Posterior vena cava (tissue), 2 donors: ENCODE measurements at regions of chr7 and their contacts with region 1.

Region 1: GRCh38 chr7:5997222-5997808 is 11.5 kb downstream of the PMS2 start:
- DNase-seq: no peak

Region 2: GRCh38 chr7:5854738-5855137 is 142.6 kb before region 1 on chr7:
- intact Hi-C with region 1: no loop called
- DNase-seq: no peak

Region 3: DNA sequence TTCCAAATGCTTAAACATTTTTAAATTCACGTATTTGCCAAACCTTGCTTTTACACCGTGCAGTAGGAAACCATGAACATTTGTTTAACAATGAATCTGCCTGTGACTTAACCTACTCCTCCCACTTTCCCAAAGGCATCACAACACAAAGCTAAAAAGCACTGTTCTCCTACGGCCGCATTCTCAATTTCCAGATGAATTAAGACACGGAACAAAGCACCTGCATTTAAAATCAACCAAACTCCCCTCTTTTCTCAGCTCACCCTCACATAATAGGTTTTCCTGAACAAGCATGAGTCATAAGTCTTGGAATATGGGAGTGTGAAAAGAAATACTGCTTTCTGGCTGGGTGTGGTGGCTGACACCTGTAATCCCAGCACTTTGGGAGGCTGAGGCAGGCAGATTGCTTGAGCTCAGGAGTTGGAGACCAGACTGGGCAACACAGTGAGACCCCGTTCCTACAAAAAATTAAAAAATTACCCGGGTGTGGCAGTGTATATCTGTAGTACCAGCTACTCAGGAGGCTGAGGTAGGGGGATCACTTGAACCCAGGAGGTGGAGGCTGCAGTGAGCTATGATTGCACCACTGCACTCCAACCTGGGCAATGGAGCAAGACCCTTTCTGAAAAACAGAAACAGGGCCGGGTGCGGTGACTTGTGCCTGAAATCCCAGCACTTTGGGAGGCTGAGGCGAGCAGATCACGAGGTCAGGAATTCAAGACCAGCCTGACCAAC is 326.8 kb after region 1 on chr7:
- intact Hi-C with region 1: loop called in 1 of 2 experiments (anchors 10 kb)
- DNase-seq: no peak

Region 4: DNA sequence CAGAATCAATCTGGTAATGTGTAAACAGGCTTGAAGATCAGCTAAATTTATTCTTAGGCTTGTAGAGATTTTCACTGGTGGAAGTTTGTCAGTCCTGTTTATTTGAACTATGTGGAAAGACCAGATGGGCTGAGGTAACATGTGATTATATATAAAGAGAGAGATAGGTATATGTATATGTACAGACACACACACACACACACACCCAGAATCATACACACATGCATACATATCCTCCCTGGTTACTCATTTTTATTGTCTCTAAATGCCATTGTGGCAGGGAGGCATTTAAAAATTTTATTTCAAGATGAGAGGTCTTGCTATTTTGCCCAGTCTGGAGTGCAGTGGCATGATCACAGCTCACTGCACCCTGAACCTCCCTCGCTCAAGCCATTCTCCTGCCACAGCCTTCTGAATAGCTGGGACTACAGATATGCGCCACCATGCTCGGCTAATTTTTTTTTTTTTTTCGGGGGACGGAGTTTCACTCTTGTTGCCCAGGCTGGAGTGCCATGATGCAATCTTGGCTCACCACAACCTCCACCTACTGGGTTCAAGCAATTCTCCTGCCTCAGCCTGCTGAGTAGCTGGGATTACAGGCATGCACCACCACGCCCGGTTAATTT is 353.2 kb after region 1 on chr7:
- intact Hi-C with region 1: loop called in 1 of 2 experiments (anchors 5 kb)
- DNase-seq: no peak